IMR-90 (cell line): ENCODE measurements at regions of chr6 and their contacts with region 1.

Region 1: GRCh38 chr6:41463062-41463930 is 82.9 kb upstream of the FOXP4 start:
- DNase-seq: peak; percentile 77
- ATAC-seq: peak; percentile 99
- H3K4me3 ChIP-seq: no peak overlapping the region
- H3K27ac ChIP-seq: no peak overlapping the region
- H3K4me1 ChIP-seq: no peaks in the 10 kb centered on the region
- H3K27me3 ChIP-seq: peaks cover 27% of the 10 kb centered on the region
- CTCF ChIP-seq: peak; percentile 92
- POLR2A ChIP-seq: 0 out of 2 replicates have a peak, but pooled peaks have one; percentile 32
- RAD21 ChIP-seq: peak; percentile 91

Region 2: DNA sequence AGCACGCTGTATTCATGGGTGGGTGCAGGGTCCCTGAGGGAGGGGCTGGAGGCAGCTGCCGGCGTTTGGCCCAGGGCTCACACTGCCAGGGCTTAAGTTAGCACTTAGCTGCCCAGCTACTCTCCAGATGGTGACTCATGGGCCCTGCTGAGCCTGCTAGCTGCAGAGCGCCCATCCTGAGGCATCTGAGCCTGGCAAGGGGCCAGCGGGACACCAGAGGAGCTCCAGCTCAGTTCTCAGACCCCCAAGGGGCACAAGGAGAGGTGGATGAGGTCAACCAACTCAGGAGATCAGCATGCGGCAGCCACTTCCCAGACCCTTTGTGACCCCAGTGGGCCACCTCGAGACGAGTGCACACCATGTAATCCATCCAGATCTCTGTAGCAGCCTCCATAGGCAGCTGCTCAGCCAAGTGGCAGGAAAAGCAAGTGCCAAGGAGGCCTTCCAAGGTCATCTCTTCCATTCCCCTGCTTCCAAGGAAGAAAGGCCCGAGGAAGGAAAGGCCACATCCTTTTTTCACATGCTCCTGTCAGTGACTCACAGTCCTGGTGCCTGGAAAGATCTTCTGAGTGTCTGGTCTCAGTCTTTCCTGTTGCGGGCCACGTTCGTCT is 118.2 kb after region 1 on chr6:
- CTCF ChIA-PET with region 1: no interaction called
- POLR2A ChIA-PET with region 1: no interaction called
- dilution Hi-C with region 1: no loop called
- in situ Hi-C with region 1: loop called (anchors 10 kb)
- intact Hi-C with region 1: loop called (anchors 1 kb)
- DNase-seq: peak; percentile 89
- ATAC-seq: peak; percentile 83
- H3K4me3 ChIP-seq: no peak overlapping the region
- H3K27ac ChIP-seq: peak overlapping the region; percentile 47
- H3K4me1 ChIP-seq: peaks cover 32% of the 10 kb centered on the region
- H3K27me3 ChIP-seq: no peaks in the 10 kb centered on the region
- CTCF ChIP-seq: no peak
- POLR2A ChIP-seq: no peak
- RAD21 ChIP-seq: peak; percentile 10; the same call in 1 of the 2 replicates